ENCODE measurements at regions of chr19 and their contacts with region 1.

Region 1: DNA sequence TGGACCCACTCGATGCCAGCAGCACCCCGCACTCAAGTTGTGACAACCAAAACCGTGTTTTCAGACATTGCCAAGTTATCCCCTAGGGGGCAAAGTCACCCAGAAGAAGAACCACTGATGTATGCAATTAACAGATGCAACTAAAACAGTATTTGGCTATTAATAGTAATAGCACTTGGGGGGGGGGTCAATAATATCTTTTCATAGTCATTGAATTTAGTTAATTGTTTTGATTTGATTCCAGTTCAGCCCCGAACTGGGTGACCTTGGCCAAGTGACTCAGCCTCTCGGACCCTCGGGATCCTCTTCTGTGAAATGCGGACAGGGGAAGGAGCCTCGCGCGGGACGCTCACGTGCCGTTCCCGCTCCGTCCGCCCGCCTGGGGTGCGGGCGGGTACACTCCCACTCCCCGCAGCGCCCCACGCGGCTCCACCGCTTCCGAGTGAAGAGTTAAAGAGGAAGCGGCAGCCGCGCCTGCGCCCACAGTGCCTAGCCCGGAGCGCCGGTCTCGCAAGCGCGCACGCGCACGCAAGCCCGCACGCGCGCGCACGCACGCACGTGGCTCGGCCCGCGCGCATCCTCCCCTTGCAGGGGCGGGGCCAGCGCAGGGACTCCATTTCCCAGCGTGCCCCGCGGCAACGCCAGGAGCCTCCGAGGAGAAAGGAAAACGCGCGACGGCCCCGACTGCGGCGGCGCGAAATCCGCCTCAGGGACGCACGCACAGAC is 449 bp upstream of the DAZAP1 start:
- DNase-seq: peak; percentile 98
- H3K4me3 Mint-ChIP-seq: peak overlapping the region; percentile 69
- H3K27ac Mint-ChIP-seq: peak overlapping the region; percentile 81
- H3K4me1 Mint-ChIP-seq: peaks cover 43% of the 10 kb centered on the region
- H3K27me3 Mint-ChIP-seq: peaks cover 5% of the 10 kb centered on the region

Region 2: DNA sequence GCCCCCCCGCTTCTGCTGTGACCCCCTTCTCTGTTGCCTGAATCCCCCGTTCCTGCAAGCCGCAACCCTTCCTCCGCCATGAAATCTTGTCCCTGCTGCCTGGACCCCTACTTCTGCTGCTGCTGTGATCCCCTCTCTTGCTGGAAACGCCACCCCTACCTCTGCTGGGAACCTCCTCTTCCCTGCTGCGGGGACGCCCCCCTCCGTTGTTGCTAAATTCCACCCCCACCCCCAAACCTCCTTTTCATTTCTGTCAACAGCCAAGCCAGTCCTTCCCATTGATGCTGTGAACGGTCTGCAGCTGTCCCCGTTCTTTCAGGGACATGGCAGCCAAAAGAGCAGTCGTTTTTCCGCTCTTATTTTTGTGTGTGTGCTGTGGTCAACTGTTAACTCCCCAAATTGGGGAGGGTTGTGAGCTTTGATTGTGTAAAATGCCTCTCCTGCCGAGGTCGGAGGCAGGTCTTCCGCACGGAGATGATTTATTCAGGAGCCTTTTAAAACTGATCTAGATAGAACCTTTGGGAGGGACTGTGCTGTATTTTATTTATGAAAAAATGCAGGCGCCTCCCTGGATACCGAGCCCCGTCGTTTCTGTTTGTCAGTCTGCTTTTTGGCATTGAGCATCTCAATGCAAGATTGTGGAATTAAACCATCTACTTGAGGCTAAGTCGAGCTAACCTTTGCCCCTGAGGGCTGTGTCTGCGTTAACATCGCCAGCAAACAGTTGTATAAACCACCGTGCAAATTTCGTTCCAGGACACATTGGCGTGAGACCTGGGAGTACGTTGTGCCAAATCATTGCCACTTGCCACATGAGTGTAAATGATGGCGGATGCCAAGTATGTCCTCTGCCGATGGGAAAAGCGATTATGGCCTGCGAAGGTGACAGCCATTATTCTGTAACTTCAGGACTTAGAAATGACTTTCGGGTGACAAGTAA is 51.1 kb before region 1 on chr19:
- CTCF ChIA-PET with region 1: no interaction called
- intact Hi-C with region 1: loop called (anchors 2 kb)
- DNase-seq: peak; percentile 41
- H3K4me3 Mint-ChIP-seq: peak overlapping the region; percentile 83
- H3K27ac Mint-ChIP-seq: peak overlapping the region; percentile 59
- H3K4me1 Mint-ChIP-seq: peaks cover 15% of the 10 kb centered on the region
- H3K27me3 Mint-ChIP-seq: no peaks in the 10 kb centered on the region

Region 3: DNA sequence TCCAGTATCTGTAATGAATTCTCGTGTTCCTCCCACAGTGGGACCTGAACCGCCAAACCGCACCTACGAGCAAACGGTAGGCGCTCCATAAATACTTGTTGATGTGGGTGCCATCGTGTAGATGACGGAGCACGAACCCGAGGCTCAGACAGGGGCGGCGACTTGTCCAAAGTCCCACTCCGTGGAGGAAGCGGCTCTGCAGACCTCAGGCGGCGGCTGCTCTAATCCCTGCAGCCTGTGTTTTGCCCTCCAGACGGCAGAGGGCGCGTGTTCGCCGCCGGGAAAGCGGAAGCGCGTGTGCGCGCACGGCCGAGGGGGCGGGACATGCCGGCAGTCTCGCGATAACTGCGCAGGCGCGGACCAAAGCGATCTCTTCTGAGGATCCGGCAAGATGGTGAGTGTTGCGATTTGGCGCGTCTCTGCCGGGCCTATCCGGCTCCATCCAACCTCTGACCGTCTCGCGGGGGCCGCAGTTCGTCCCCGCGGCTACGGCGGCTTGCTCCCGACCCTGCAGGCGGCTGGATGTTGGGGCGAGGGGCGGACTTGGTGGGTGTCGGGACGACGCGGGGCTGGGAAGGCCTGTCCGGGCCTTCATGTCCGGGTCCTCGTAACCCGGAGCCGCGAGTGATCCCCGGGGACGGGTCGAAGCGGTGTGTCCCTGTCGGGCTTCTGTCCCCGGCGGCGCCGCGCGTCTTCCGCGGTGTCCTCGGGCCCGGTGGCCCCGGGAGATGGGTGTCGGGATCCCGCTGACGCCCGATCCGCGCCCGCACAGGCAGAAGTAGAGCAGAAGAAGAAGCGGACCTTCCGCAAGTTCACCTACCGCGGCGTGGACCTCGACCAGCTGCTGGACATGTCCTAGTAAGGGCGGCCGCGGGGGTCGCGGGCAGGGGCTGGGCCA is 31.3 kb after region 1 on chr19 and contains the start of gene RPS15:
- CTCF ChIA-PET with region 1: interaction called, 4 read pairs
- intact Hi-C with region 1: loop called (anchors 1 kb)
- DNase-seq: peak; percentile 96
- H3K4me3 Mint-ChIP-seq: peak within 1 kb of the TSS; percentile 98
- H3K27ac Mint-ChIP-seq: peak within 1 kb of the TSS; percentile 99
- H3K4me1 Mint-ChIP-seq: peaks cover 40% of the 10 kb centered on the region
- H3K27me3 Mint-ChIP-seq: no peaks in the 10 kb centered on the region
- total RNA-seq, gene RPS15: 1,902 to 1,906 TPM

Region 4: DNA sequence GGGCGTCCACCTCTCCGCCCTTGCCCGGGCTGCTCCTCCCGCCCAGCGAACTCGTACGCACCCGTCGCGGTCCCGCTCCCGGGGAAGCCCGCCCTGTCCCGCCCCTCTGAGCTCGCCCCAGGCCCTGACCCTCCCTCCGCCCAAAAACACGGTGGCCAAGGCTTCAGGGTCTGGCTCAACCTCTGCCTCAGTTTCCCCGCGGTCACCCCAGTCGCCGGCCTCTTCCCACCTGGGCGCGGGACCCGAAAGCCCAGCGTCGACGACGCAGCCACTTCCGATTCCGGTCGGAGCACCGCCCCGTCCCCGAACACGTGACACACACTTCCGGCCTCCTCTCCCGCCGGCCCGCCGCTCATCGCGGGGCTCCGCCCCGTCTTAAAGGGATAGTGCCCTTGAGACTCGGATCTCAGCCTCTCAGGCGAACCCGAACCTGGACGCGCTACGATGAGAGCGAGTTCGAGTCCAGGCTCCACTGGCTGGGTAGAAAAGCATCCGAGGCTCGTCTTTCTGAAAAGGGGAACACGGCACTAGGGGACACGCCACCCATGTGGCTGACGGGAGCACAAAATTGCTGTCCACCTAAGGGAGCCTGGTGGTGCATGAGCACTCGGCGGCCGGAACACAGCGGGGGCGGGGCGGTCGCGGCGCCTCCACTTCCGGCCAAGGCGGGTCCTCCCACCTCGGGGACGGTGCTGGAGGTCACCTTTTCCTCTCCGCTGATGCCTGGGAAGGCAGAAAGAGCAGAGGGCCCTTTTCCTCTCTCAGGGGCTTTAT is 72.2 kb after region 1 on chr19 and contains the start of gene C19orf25:
- CTCF ChIA-PET with region 1: no interaction called
- intact Hi-C with region 1: loop called (anchors 1 kb)
- DNase-seq: peak; percentile 96
- H3K4me3 Mint-ChIP-seq: peak within 1 kb of the TSS; percentile 99
- H3K27ac Mint-ChIP-seq: peak within 1 kb of the TSS; percentile 95
- H3K4me1 Mint-ChIP-seq: peaks cover 15% of the 10 kb centered on the region
- H3K27me3 Mint-ChIP-seq: no peaks in the 10 kb centered on the region
- total RNA-seq, gene C19orf25: 17.5 to 20.8 TPM

Region 5: GRCh38 chr19:1513499-1514294 is 106.8 kb after region 1 on chr19:
- CTCF ChIA-PET with region 1: no interaction called
- intact Hi-C with region 1: no loop called
- DNase-seq: peak; percentile 69
- H3K4me3 Mint-ChIP-seq: no peak overlapping the region
- H3K27ac Mint-ChIP-seq: no peak overlapping the region
- H3K4me1 Mint-ChIP-seq: peaks cover 12% of the 10 kb centered on the region
- H3K27me3 Mint-ChIP-seq: peaks cover 6% of the 10 kb centered on the region

Region 6: DNA sequence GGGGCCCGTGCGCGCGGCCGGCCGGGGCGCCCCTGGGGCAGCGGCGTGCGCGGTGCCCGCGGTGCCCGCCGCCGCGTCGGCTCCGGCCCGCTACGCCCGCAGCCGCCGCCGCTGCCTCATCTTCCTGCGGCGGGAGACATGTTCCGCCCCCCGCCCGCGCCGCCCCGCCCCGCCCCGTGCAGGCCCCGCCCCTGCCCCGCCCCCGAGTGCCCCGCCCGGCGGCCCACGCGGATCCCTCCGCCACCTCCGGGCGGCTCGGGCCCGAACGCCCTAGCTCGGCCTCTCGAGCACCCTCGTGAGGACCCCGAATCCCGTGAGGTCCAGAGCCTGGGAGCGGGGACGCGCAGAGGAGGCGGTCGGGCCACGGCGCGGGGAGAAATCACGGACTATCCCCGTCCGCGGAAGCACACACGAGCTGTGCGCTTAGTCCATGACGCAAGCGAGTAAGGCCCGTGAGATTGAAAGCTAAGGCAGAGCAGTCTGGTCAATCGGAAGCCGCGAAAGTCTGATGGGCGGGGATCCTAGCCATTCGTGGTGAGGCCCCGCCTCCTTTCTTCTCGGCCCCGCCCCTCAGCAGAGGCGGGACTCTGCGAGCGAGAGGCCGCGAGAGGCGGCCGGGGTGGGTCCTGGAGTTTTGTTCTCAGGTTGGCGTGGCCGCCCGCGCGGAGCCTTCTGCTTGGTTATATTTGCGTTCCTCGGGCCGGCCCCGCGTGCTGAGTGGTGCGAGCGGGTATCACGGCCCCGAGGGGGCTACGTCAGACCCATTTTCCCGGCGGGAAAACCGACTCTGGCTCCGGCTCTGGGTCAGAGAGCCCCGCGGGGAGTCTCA is 245.7 kb after region 1 on chr19 and contains the start of gene TCF3:
- CTCF ChIA-PET with region 1: no interaction called
- intact Hi-C with region 1: loop called (anchors 5 kb)
- DNase-seq: peak; percentile 98
- H3K4me3 Mint-ChIP-seq: peak within 1 kb of the TSS; percentile 82
- H3K27ac Mint-ChIP-seq: peak within 1 kb of the TSS; percentile 89
- H3K4me1 Mint-ChIP-seq: peaks cover 19% of the 10 kb centered on the region
- H3K27me3 Mint-ChIP-seq: no peaks in the 10 kb centered on the region
- total RNA-seq, gene TCF3: 84.8 to 86.7 TPM

Measured in activated naive CD4-positive, alpha-beta T cell treated with anti-CD3 and anti-CD28 coated beads for 36 hours (primary cell).